ENCODE measurements at regions of chr15 and their contacts with region 1.

Region 1: GRCh38 chr15:49046220-49047102 is at the start of gene SECISBP2L:
- DNase-seq: peak; percentile 87 to 98 (median 95)

Region 2: GRCh38 chr15:48877630-48878595 is 168.5 kb before region 1 on chr15 and contains the start of gene EID1:
- intact Hi-C with region 1: loop called (anchors 1 kb)
- DNase-seq: peak; percentile 82 to 97 (median 93)

Region 3: DNA sequence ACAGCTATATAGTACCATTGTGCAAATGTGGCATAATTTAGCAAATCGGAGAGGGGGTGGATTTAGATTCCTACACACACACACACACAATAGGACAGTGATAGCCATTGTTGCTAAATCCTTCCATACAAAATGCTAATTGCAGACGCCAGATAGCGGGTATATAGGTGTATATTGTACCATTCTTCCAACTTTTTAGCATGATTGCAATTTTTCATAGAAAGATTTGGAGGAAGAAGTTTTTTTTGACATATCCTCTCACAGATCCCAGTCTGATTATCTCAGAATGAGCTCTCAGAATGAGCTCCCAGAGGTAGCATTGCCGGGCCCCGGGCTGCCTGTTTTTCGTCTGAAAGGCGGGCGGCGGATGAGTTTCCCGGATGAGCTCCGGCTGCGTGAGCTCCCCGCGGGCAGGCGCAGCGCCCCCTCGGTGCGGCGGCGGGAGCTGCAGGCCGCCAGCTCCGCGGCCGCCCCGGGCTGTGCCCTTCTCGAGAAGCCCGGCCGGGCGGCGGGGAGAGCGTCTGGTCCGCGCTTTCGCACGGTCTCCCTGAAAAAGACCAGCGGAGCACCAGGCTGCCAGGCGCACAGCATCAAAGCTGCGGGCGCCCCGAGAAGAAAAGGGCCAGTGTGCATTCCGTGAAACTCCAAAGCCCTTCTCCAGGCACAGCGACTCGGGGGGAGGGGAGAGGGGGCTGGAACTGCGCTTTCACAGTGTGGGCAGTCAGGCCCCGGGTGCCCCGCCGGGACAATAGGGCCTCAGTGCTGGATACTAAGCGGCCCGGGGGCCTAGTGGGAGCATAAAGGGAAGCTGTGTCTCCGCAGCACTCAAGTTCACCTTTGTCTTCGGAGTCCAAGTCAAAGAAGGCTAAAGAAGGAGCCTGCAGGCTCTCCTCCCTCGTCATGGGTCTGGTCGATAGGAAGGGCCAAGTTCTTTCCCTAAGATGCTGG is 70.7 kb before region 1 on chr15:
- intact Hi-C with region 1: loop called (anchors 2 kb)
- DNase-seq: peak; percentile 83 to 95 (median 91)

Region 4: DNA sequence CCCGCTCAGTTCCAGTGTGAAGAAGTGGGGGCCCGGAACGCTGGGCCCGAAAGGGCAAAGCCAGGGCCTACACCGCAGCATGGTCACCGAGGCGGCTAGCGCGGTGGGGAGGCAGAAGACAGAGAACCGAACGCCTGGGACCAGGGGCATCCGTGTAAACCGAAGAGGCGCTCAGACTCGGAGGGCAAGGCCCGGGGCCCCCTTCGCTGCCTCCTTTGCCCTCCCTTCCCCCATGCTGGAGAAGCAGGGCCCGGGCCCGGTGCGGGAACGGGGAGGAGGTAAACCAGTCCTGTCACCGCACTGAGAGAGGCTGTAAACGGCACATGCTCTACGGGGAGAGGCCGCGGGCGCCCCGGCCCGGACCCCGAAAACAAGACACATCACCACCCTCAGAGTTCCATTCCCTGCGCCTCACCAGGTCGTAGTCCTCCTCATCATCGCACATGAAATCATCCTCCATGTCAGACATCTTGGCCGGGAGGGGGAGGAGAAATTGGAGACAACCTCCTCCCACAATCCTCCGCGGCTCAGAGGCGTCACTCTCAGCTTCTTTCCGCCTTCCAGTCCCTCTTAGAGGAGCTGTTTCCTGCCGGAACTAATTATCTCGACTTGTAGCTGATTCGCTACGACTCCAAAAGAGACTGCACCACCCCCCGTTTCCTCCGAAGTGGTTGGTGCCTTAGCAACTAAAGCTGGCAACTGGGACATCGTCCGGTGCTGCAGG is 108.8 kb after region 1 on chr15 and contains the start of gene COPS2:
- intact Hi-C with region 1: loop called (anchors 5 kb)
- DNase-seq: peak; percentile 91 to 99 (median 97)

Region 5: GRCh38 chr15:49731187-49732099 is 685.0 kb after region 1 on chr15:
- intact Hi-C with region 1: no loop called
- DNase-seq: no peak

Region 6: DNA sequence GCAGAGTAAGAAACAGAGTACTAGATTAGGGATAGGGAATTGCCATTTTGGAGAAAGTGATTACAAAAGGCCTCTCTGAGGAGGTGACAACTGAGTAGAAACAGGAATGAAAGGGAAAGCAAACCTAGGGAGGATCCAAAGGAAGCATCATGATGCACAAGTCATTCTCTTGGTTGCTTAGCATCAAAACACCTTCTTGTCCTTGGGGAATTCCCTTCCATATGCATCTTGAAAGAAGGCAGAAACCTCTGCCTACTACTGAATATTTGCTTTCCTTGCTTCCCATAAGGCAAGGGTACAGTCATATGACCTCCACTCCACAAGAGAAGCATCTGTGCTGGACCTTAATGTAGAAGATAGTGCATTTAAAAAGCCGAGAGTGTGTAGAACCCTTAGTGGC is 1284.5 kb after region 1 on chr15:
- intact Hi-C with region 1: no loop called
- DNase-seq: no peak

Measured in head of caudate nucleus (tissue), 42 donors.